PC-3 (cell line): ENCODE measurements at regions of chr21 and their contacts with region 1.

Region 1: GRCh38 chr21:33641336-33642026 is at the start of gene CRYZL1:
- DNase-seq: peak; percentile 100
- ATAC-seq: peak; percentile 77
- H3K4me3 ChIP-seq: peak within 1 kb of the TSS; percentile 91
- H3K27ac ChIP-seq: peak within 1 kb of the TSS; percentile 61
- H3K4me1 ChIP-seq: peaks cover 26% of the 10 kb centered on the region
- H3K27me3 ChIP-seq: no peaks in the 10 kb centered on the region
- CTCF ChIP-seq: no peak
- total RNA-seq, gene CRYZL1: 12.4 and 16.6 TPM in 2 replicates

Region 2: DNA sequence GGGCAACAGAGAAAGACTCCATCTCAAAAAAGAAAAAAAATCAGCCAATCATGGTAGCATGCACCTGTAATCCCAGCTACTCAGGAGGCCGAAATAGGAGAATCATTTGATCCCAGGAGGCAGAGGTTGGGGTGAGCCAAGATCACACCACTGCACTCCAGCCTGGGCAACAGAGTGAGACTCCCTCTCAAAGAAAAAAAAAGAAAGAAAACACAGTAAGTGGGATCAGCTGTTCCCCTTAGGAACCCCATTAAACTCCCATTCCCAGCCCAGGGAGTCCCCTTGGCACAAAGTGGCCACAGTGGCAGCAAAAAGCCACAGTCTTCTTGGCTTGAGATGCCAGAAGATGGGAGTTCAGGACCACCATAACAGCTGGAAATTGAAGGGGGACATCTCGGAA is 170.8 kb before region 1 on chr21:
- CTCF ChIA-PET with region 1: no interaction called
- POLR2A ChIA-PET with region 1: no interaction called
- intact Hi-C with region 1: no loop called
- DNase-seq: no peak
- ATAC-seq: no peak
- H3K4me3 ChIP-seq: no peak overlapping the region
- H3K27ac ChIP-seq: no peak overlapping the region
- H3K4me1 ChIP-seq: 0 out of 2 replicates have a peak, but pooled peaks cover 1% of the 10 kb centered on the region
- H3K27me3 ChIP-seq: no peaks in the 10 kb centered on the region
- CTCF ChIP-seq: no peak

Region 3: DNA sequence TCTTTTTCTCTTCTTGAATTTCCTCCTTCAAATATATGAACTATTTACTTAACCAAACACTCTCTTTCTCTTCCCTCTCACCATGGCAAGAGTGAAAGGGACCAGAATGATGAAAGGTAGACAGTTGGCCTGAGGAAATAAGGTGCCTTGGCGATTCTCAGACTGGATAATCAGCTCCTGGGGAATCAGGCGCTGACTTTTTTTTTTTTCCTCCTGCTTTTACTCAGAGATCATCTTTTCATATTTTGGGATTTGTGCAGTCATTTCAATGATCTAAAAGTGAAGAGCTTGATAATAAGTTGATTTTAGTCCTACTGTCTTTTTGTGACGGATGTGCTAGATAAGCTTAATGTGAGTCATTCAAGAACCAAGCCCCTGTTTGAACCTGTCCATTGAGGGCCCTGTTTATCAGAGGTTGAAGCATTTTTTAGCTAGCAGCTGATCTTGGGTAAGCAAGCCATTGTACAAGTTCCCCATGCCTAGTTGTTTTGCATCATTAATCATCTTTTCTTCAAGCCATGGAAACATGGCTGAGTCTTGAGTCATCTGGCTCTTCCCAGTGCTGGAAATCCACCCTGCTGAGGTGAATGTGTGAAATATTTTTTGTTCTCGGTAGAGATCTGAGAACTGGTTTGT is 41.6 kb after region 1 on chr21:
- CTCF ChIA-PET with region 1: no interaction called
- POLR2A ChIA-PET with region 1: no interaction called
- intact Hi-C with region 1: loop called (anchors 2 kb)
- DNase-seq: peak; percentile 86
- ATAC-seq: peak; percentile 60
- H3K4me3 ChIP-seq: no peak overlapping the region
- H3K27ac ChIP-seq: 0 out of 2 replicates have a peak overlapping the region, but pooled peaks have one; percentile 1
- H3K4me1 ChIP-seq: peaks cover 38% of the 10 kb centered on the region
- H3K27me3 ChIP-seq: no peaks in the 10 kb centered on the region
- CTCF ChIP-seq: no peak

Region 4: DNA sequence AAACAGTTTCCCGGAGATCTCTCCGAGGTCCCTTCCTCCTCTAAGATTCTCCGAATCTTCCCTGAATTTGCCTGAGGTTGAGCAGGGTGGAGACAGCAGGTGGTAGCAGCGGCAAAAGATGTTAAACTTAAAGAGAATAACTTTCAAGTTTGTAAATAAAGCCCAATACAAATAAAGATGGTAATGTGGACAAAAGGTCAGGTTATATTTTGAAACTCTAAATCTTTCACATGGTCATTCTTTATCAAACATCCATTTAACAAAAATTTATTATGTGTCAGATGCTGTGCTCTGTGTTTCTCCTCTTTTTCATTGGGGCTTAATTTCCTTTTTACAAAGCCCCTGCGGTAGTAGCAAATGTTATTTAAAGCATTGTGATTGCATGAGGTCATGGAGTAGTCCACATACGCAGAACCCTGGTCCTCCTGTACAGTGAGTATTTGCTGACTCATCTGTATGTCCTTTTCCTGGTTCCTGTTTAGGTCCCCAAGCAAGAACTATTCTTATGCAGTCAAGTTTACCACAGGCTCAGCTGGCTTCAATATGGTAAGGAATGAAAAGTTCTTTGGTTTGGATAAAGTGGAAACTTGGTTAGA is 120.1 kb after region 1 on chr21:
- CTCF ChIA-PET with region 1: no interaction called
- POLR2A ChIA-PET with region 1: no interaction called
- intact Hi-C with region 1: loop called (anchors 2 kb)
- DNase-seq: peak; percentile 93
- ATAC-seq: peak; percentile 99
- H3K4me3 ChIP-seq: peak overlapping the region; percentile 28; the same call in 1 of the 2 replicates
- H3K27ac ChIP-seq: peak overlapping the region; percentile 57
- H3K4me1 ChIP-seq: peaks cover 27% of the 10 kb centered on the region
- H3K27me3 ChIP-seq: no peaks in the 10 kb centered on the region
- CTCF ChIP-seq: peak; percentile 33; the same call in 1 of the 2 replicates

Region 5: DNA sequence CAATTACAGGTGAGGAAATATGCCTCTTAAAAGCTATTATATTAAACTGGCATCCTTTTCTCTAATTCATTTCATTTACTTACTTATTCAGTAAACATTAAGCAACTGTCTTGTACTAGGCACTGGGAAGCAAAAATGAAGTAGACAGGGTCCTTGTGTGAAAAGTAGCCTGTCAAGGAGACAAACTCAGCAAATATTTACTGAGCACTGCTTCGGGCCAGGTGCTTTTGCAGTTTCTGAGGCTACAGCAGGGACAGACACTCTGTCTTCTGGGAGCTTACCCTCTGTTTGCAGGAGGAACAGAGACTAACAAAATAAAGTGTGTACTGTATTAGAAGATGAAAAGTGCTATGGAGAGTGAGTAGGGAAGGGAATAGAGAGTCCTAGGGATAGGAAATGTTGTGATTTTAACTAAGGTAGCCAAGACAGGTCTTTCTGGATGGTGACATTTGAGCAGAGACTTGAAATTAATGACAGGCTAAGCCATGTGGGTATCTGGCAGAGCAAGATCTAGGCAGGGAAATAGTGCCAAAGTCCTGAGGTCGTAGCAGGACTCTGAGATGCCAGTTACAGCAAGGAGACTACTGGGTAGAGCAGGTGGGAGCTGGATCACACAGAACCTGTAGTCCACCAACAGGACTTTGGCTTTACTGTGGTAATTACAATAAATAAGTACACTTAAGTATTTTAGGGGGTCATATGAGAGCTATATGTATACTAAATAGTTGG is 133.8 kb after region 1 on chr21:
- CTCF ChIA-PET with region 1: no interaction called
- POLR2A ChIA-PET with region 1: no interaction called
- intact Hi-C with region 1: no loop called
- DNase-seq: no peak
- ATAC-seq: no peak
- H3K4me3 ChIP-seq: no peak overlapping the region
- H3K27ac ChIP-seq: no peak overlapping the region
- H3K4me1 ChIP-seq: no peaks in the 10 kb centered on the region
- H3K27me3 ChIP-seq: no peaks in the 10 kb centered on the region
- CTCF ChIP-seq: no peak

Region 6: DNA sequence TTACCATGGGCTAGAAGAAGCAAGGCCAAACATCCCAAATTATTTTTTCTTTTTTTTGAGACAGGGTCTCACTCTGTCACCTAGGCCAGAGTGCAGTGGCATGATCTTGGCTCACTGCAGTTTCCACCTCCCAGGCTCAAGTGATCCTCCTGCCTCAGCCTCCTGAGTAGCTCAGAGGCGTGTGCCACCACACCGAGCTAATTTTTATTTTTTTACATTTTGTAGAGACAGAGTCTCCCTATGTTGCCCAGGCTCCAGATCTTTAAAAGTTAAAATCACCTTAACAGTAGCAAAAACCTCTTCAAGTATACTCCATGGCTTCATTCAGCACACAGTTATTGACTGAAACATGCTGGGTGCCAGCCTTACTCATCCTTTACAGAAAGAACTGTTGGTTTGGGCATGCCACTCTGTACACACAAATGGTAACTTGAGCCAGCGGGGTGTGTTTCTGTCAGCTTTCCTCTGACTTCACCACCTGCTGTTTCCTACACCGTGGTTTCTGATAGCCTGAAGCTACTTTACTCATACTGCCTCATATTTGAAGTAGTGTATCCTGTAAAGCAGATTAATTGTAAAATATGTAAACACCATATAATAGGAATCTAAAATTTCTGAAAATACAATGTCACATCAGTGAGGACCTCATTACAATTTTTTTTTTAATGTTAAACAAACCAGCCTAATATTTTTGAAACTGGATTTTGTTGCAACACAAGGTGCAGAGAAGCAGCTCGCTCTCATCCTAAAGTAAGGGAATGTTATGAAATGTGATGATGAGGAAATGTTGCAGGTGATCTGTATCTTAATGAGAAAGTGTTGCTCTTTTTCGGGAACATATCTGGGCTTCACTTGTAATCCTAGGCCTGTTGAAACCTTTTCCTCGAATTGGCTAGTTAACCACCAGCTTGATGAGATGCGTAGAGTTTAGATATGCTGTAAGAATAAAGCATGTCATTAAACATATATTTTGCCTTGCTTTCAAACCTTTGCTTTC is 160.2 kb after region 1 on chr21:
- CTCF ChIA-PET with region 1: no interaction called
- POLR2A ChIA-PET with region 1: no interaction called
- intact Hi-C with region 1: loop called (anchors 1 kb)
- DNase-seq: peak; percentile 98
- ATAC-seq: peak; percentile 99
- H3K4me3 ChIP-seq: peak overlapping the region; percentile 13; the same call in 1 of the 2 replicates
- H3K27ac ChIP-seq: peak overlapping the region; percentile 85
- H3K4me1 ChIP-seq: peaks cover 26% of the 10 kb centered on the region
- H3K27me3 ChIP-seq: no peaks in the 10 kb centered on the region
- CTCF ChIP-seq: no peak

Region 7: DNA sequence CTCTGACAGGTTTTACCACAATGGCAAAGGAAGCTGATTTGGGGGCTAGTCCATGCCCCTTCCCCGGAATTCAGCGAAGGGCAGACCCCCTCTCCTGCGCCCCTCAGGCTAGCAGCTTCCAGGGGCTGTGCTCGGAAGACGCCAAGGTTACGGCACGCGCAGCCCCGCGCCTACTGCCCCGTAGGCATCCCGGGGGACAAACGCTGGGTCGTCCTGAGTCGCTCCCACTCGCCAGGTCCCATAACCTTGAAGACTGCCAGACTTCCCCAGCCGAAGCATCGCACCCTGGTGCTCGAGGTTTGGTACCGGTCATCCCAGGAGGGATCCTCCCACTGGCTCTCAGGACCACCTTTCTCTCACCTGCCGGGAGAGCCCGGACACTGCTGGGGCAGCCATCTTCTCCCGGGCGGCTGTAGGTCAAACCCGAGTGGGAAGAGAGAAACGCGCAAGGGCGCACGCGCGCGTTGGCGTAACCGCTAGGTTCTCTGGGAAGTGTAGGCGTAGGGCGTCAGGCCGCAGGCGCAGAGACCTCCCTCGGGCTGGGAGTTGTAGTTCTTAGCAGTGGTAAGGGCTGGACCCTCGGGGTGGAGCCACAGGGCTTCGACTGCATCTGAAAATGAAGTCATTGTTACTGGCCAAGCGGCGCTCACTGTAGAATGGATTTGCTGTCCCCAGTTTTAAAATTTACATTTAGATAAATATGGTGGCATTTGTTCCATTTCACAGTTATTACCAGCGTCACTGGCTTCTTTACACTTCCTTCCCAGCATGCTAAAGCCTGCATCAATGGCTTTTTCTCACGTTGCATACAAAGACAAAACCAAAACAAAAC is 274.1 kb after region 1 on chr21 and contains the start of gene ATP5PO:
- CTCF ChIA-PET with region 1: no interaction called
- POLR2A ChIA-PET with region 1: no interaction called
- intact Hi-C with region 1: loop called (anchors 1 kb)
- DNase-seq: peak; percentile 99
- ATAC-seq: peak; percentile 99
- H3K4me3 ChIP-seq: peak within 1 kb of the TSS; percentile 85
- H3K27ac ChIP-seq: peak within 1 kb of the TSS; percentile 36
- H3K4me1 ChIP-seq: peaks cover 13% of the 10 kb centered on the region
- H3K27me3 ChIP-seq: no peaks in the 10 kb centered on the region
- CTCF ChIP-seq: no peak
- total RNA-seq, gene ATP5PO: 288 and 386 TPM in 2 replicates